Colonic mucosa (tissue), 4 donors: ENCODE measurements at regions of chr7 and their contacts with region 1.

Region 1: DNA sequence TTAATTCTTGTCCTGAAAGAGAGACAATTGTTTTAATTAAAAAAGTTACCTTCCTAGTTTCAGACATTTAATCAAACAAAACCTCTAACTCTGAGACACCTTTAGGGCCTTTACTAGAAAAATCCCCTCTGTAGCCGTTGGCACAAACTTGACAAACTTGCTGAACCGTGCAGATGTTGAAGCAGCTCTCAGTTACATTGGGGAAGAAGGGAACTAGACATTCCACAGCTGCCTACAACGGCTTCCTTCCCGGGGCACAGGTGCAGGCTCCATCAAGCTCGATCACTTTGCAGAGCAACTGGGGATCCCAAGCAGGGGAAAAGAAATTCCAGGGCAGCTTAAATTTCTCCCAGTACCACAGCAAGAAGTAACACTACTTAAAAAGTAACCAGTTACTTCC is 141.3 kb downstream of the SKAP2 start:
- DNase-seq: no peak
- H3K4me3 ChIP-seq: no peak overlapping the region
- H3K27ac ChIP-seq: no peak overlapping the region
- H3K4me1 ChIP-seq: no peaks in the 10 kb centered on the region
- H3K27me3 ChIP-seq: no peaks in the 10 kb centered on the region
- CTCF ChIP-seq: no peak

Region 2: DNA sequence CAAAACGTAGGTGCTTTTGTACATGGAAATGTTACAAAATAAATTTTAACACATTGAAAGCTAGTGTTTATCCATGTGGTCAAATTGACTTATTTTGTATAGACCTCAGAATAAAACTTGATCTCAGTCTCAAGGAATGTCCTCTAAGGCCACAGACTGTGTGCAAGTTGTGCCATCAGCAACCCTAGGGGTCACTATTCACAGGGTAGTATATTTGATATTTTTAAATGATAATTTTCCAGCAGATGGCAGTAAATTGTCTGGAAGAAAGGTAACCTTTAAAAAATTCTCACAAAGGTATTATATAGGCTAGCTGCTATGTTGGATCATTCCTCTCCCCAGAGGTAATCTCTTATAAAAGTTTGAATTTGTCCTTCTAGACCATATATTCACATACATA is 444.4 kb before region 1 on chr7:
- intact Hi-C with region 1: no loop called
- DNase-seq: no peak
- H3K4me3 ChIP-seq: no peak overlapping the region
- H3K27ac ChIP-seq: no peak overlapping the region
- H3K4me1 ChIP-seq: no peaks in the 10 kb centered on the region
- H3K27me3 ChIP-seq: no peaks in the 10 kb centered on the region
- CTCF ChIP-seq: no peak

Region 3: GRCh38 chr7:26777385-26777784 is 54.3 kb after region 1 on chr7:
- intact Hi-C with region 1: loop called (anchors 10 kb)
- DNase-seq: no peak
- H3K4me3 ChIP-seq: no peak overlapping the region
- H3K27ac ChIP-seq: no peak overlapping the region
- H3K4me1 ChIP-seq: no peaks in the 10 kb centered on the region
- H3K27me3 ChIP-seq: no peaks in the 10 kb centered on the region
- CTCF ChIP-seq: no peak

Region 4: GRCh38 chr7:26805045-26805444 is 81.9 kb after region 1 on chr7:
- intact Hi-C with region 1: no loop called
- DNase-seq: no peak
- H3K4me3 ChIP-seq: no peak overlapping the region
- H3K27ac ChIP-seq: no peak overlapping the region
- H3K4me1 ChIP-seq: no peaks in the 10 kb centered on the region
- H3K27me3 ChIP-seq: no peaks in the 10 kb centered on the region
- CTCF ChIP-seq: no peak

Region 5: GRCh38 chr7:27053153-27053552 is 330.0 kb after region 1 on chr7:
- intact Hi-C with region 1: no loop called
- DNase-seq: no peak
- H3K4me3 ChIP-seq: no peak overlapping the region
- H3K27ac ChIP-seq: no peak overlapping the region
- H3K4me1 ChIP-seq: no peaks in the 10 kb centered on the region
- H3K27me3 ChIP-seq: no peaks in the 10 kb centered on the region
- CTCF ChIP-seq: no peak